ENCODE measurements at regions of chr5 and their contacts with region 1.

Region 1: GRCh38 chr5:81105261-81105877 is 127.8 kb upstream of the CKMT2 start:
- DNase-seq: no peak
- H3K4me3 Mint-ChIP-seq: no peak overlapping the region
- H3K27ac Mint-ChIP-seq: peak overlapping the region; percentile 5
- H3K4me1 Mint-ChIP-seq: peaks cover 25% of the 10 kb centered on the region
- H3K27me3 Mint-ChIP-seq: no peaks in the 10 kb centered on the region

Region 2: DNA sequence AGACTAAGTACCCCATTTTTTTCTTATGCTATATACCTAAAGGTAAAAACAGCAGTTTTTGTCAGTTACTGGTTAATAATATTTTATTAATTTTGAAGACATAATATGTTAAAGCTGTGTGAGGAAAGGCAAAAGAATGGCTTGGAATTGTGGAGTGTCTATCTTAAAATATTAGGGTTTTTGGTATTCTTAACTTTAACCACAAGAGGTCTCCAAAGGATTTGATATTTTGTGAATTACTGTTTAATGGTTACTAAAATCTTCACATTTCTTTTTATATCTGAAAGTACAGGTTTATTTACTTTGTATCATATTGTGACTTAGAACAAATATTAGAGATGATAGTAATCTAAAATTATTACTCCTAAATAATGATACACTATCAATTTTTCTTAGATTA is 418.6 kb before region 1 on chr5:
- CTCF ChIA-PET with region 1: interaction called, 15 read pairs
- intact Hi-C with region 1: loop called (anchors 1 kb)
- DNase-seq: no peak
- H3K4me3 Mint-ChIP-seq: no peak overlapping the region
- H3K27ac Mint-ChIP-seq: no peak overlapping the region
- H3K4me1 Mint-ChIP-seq: peaks cover 11% of the 10 kb centered on the region
- H3K27me3 Mint-ChIP-seq: no peaks in the 10 kb centered on the region

Region 3: GRCh38 chr5:80711938-80712337 is 393.4 kb before region 1 on chr5:
- CTCF ChIA-PET with region 1: interaction called, 10 read pairs
- intact Hi-C with region 1: loop called (anchors 1 kb)
- DNase-seq: peak; percentile 33
- H3K4me3 Mint-ChIP-seq: no peak overlapping the region
- H3K27ac Mint-ChIP-seq: no peak overlapping the region
- H3K4me1 Mint-ChIP-seq: peaks cover 6% of the 10 kb centered on the region
- H3K27me3 Mint-ChIP-seq: no peaks in the 10 kb centered on the region

Region 4: DNA sequence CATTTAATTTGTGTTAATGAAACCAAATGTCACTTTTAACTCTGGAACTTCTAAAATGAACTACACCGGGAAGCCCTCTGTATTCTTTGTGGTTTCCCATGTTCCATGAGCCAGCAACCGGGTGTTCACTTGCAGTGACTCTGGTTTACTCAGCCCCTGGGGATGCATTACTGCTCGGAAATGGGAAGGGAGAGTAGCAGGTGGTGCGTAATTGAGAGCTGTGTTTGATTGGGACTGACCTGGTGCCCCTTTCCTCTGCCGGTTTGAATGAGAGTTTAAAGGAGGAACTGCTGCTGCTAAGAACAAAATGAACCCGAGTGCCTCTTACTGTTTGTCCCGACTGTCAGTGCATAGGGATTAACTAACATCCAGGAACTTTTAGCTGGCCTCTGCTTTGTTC is 350.5 kb before region 1 on chr5:
- CTCF ChIA-PET with region 1: interaction called, 3 read pairs
- intact Hi-C with region 1: loop called (anchors 5 kb)
- DNase-seq: peak; percentile 81
- H3K4me3 Mint-ChIP-seq: peak overlapping the region; percentile 32
- H3K27ac Mint-ChIP-seq: peak overlapping the region; percentile 43
- H3K4me1 Mint-ChIP-seq: peaks cover 54% of the 10 kb centered on the region
- H3K27me3 Mint-ChIP-seq: no peaks in the 10 kb centered on the region

Region 5: DNA sequence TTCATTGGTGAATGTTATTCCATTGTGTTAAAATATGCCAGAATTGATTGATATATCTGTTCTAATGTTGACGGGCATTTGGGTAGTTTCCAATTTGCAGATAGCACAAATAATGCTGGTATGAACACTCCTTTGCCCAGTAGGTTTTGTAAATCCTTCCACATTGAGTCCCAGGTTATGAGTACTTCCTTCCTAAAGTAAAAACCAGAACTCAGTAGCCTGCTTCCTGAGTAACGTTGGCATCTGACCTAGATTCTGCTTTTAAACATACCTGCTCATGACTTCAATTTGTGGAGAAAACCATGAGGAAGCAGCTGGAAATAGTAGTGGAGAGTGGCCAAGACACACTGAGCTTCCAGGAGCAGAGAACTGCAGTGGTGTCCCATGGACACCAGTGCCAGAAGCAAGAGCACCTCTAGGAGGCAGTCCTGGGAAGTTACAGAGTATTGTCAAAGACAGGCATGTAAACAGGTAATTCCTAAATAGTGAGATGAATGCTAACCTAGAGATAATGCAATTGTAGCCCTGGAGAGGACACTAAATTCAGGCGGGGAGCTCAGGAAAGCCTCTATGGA is 169.5 kb before region 1 on chr5:
- CTCF ChIA-PET with region 1: interaction called, 10 read pairs
- intact Hi-C with region 1: loop called (anchors 1 kb)
- DNase-seq: peak; percentile 20
- H3K4me3 Mint-ChIP-seq: no peak overlapping the region
- H3K27ac Mint-ChIP-seq: no peak overlapping the region
- H3K4me1 Mint-ChIP-seq: peaks cover 4% of the 10 kb centered on the region
- H3K27me3 Mint-ChIP-seq: no peaks in the 10 kb centered on the region

Region 6: GRCh38 chr5:80985600-80986228 is 119.7 kb before region 1 on chr5:
- CTCF ChIA-PET with region 1: interaction called, 10 read pairs
- intact Hi-C with region 1: no loop called
- DNase-seq: no peak
- H3K4me3 Mint-ChIP-seq: peak overlapping the region; percentile 11
- H3K27ac Mint-ChIP-seq: peak overlapping the region; percentile 62
- H3K4me1 Mint-ChIP-seq: peaks cover 69% of the 10 kb centered on the region
- H3K27me3 Mint-ChIP-seq: no peaks in the 10 kb centered on the region

Region 7: GRCh38 chr5:81194633-81195333 is 89.4 kb after region 1 on chr5:
- CTCF ChIA-PET with region 1: interaction called, 5 read pairs
- intact Hi-C with region 1: loop called (anchors 1 kb)
- DNase-seq: peak; percentile 88
- H3K4me3 Mint-ChIP-seq: peak overlapping the region; percentile 51
- H3K27ac Mint-ChIP-seq: no peak overlapping the region
- H3K4me1 Mint-ChIP-seq: peaks cover 8% of the 10 kb centered on the region
- H3K27me3 Mint-ChIP-seq: no peaks in the 10 kb centered on the region

Region 8: GRCh38 chr5:81409896-81410295 is 304.5 kb after region 1 on chr5:
- CTCF ChIA-PET with region 1: no interaction called
- intact Hi-C with region 1: no loop called
- DNase-seq: no peak
- H3K4me3 Mint-ChIP-seq: no peak overlapping the region
- H3K27ac Mint-ChIP-seq: no peak overlapping the region
- H3K4me1 Mint-ChIP-seq: no peaks in the 10 kb centered on the region
- H3K27me3 Mint-ChIP-seq: no peaks in the 10 kb centered on the region

Region 9: GRCh38 chr5:81851481-81852178 is 746.3 kb after region 1 on chr5:
- CTCF ChIA-PET with region 1: no interaction called
- intact Hi-C with region 1: no loop called
- DNase-seq: peak; percentile 91
- H3K4me3 Mint-ChIP-seq: peak overlapping the region; percentile 86
- H3K27ac Mint-ChIP-seq: peak overlapping the region; percentile 92
- H3K4me1 Mint-ChIP-seq: peaks cover 40% of the 10 kb centered on the region
- H3K27me3 Mint-ChIP-seq: no peaks in the 10 kb centered on the region